ENCODE measurements at regions of chr1 and their contacts with region 1.

Region 1: DNA sequence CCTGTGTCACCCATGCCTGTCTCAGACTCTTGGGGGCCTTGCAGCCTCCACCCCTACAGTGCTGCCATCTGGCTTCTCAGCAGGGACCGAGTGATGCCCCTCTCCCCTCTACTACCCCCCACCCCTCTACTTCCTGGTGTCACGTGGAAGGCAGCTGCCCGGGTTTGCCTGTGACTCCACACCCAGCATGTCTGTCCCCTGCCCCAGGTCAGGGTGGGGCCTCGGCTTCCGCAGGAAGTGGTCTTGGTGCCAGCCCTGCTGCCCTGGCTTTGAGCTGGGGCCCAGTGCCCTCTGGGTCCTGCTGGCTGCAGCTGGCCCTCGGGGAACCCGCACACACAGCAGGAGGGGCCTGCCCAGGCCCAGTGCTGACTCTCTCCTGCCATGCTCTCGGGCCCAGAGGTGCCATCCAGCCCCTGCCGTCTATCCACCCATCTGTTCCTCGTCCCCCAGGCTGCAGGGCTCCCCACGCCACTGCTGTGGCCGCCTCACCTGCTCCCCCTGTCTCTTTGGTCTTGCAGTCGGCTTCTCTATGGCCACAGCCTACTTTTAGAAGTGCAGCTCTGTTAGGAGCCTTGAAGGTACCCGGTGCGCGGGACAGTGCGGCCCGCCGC is 24.0 kb downstream of the PLCH2 start:
- DNase-seq: no peak
- H3K4me3 ChIP-seq: no peak overlapping the region
- H3K27ac ChIP-seq: no peak overlapping the region
- H3K4me1 ChIP-seq: no peaks in the 10 kb centered on the region
- H3K27me3 ChIP-seq: peaks cover 0 to 92% of the 10 kb centered on the region in 2 donors
- CTCF ChIP-seq: no peak

Region 2: DNA sequence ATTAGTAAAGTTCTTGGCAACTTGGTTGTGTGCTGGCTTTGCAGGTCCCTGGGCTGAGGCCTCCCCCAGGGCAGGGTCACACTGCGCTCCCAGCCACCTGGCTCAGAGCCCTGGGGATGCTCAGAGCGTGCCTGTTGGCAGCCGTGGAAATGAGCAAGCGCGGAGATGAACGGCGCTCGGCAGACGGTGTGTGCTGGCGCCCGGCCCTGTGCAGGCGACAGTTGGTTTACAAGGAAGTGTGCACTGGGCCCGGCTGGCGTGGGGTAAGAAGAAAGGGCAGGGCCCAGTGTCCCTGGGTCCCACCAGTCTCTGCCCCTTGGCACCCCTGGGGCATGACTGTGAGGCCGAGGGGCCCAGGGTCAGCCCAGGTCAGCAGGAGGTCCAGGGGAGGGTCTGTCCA is 62.1 kb before region 1 on chr1:
- intact Hi-C with region 1: loop called (anchors 5 kb)
- DNase-seq: no peak
- H3K4me3 ChIP-seq: no peak overlapping the region
- H3K27ac ChIP-seq: no peak overlapping the region
- H3K4me1 ChIP-seq: peaks cover 0 to 1% (median under 1%) of the 10 kb centered on the region in 4 donors
- H3K27me3 ChIP-seq: peaks cover 0 to 89% of the 10 kb centered on the region in 2 donors
- CTCF ChIP-seq: no peak

Region 3: DNA sequence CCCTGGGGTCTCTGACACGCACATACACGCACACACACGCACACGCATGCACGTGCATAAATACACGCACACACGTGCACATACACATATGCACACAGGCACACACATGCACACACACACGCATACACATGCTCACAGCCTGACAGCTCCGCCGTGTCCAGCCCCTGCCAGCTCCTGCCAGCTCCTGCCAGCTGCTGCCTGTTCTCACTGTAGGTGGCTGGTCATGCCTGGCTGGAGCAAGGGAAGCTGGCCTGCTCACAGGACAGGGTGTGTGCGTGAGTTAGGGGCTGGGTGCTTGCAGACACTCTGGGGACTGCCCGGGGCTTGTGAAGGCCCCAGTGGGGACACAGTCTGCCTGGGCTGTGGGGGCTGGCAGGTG is 19.1 kb before region 1 on chr1:
- intact Hi-C with region 1: no loop called
- DNase-seq: no peak
- H3K4me3 ChIP-seq: no peak overlapping the region
- H3K27ac ChIP-seq: no peak overlapping the region
- H3K4me1 ChIP-seq: peaks cover 0 to 23% (median 0%) of the 10 kb centered on the region in 4 donors
- H3K27me3 ChIP-seq: peaks cover 0 to 29% of the 10 kb centered on the region in 2 donors
- CTCF ChIP-seq: no peak

Measured in tibial artery (tissue), 4 donors.